Right cardiac atrium (tissue), 5 donors: ENCODE measurements at regions of chr11 and their contacts with region 1.

Region 1: DNA sequence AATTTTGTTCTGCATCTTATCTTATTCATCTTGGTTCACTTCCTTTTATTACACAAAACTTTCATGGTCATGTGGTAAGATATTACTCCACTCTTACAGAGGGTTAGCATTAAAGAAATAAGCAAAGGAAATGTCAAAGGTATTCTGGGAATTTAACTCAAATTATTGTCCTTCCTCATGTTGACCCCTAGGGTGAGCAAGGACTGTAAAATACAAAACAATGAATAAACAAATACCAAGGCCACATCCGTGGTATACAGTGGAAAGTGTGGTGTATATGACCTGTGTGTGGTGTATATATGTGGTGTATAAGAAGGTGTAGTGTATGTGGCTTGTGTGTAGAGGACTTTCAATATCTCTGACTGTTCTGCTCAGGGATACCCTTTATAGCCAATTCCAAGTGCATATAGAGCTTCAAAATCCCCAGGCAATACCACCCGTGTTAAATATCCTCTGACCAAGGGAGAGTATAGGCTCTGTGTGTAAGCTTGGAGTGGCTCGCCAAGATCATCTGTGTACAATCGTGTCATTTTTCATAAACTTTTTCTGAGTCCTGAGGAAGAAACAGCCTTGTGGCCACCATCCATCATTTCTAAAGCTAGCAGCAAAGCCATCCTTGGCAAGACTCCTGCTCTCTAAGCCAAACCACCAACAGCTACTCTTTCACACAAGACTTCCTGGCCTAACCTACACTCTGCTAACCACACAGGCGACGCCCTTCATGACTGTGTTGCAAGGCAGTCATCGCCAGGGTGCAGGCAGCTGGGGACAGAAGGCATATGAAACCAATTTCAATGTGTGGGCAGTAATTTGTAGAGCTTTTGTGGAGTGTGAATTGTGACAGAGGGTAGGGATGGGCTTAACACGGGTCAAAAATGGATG is 548.0 kb downstream of the ETS1 start:
- DNase-seq: peak in 2 of 3 donors; percentile 33 to 74
- ATAC-seq: peak; percentile 62 to 64
- H3K4me3 ChIP-seq: no peak overlapping the region
- H3K27ac ChIP-seq: no peak overlapping the region
- H3K4me1 ChIP-seq: no peaks in the 10 kb centered on the region
- H3K27me3 ChIP-seq: no peaks in the 10 kb centered on the region

Region 2: DNA sequence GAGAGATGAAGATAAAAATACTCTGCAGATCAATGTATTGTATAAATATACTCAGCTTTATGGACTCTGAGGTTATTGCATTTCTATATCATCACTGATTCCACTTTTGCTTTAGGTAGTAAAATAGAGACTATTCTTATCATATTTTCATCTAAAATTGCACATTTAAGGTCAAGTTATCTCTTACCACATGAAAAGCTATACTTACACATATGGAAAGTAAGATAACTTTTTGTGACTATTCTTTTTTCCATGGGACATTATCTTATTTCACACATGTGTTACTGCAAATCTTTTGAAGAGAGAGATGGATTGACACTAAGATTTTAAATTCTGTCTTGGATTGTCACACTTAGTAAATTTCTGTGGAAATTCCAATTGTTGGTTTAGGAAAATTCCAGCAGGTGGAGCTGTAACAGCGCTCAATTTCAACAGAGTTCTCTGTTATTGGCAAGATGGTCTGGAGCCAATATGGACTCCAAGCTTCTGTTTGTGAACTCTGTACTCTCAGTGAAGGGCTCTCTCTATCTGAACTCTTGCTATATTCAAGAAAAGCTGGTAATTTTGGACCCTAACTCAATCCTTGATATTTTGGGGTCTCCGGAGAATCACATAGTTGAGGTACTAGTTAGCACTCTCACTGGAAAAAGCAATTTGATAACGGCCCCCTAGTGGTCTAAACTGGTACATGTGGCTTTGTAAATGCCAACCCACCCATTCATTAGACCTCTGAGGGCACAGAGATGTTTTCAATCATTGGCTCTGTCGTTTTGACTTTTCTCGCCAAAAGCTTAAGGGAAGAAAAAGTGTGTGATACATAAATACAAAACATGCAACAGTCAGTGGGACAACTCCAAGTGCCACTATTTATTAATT is 118.3 kb after region 1 on chr11:
- intact Hi-C with region 1: loop called (anchors 5 to 10 kb)
- DNase-seq: no peak
- ATAC-seq: peak; percentile 80 to 87
- H3K4me3 ChIP-seq: peak overlapping the region; percentile 25
- H3K27ac ChIP-seq: no peak overlapping the region
- H3K4me1 ChIP-seq: no peaks in the 10 kb centered on the region
- H3K27me3 ChIP-seq: no peaks in the 10 kb centered on the region

Region 3: DNA sequence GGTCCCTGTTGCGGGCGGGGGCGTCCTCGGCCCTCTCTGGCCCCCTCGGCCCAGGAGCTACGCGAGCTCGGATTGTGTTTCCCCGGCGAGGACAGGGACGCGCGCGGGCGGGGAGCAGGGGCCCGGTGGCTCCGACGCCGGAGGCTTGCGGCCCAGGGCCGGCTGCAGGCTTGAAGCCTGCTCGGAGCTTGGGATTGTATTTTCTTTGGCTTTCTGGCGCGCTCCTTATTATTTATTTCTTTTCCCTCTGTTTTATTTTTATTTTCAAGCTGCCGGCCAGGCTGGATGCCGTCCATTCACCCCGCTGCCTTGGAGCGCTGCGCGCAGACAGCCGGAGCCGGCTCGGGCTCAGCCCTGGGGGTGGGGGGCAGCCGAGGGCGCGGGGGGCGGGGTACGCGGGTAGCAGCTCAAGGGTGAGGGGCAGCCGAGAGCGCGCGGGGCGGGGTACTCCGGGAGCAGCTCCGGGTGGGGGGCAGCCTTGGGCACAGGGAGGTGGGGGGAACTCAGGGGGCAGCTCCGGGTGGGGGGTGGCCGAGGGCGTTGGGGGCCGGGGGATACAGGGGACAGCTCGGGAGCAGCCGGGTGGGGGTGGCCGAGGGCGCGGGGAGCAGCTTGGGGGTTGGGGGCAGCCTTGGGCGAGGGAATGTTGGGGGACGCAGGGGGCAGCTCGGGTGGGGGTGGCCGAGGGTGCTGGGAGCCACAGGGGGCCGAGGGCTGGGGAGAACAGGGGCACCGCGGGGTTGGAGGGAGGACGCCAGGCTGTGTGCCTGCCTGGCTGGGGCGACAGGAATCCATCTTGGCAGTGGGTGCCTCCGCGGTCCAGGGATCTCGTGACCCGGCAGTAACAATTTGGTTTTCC is 785.0 kb after region 1 on chr11:
- intact Hi-C with region 1: loop called in 1 of 4 experiments (anchors 10 kb)
- DNase-seq: peak in 2 of 3 donors; percentile 78
- ATAC-seq: peak; percentile 54 to 76
- H3K4me3 ChIP-seq: peak overlapping the region; percentile 16
- H3K27ac ChIP-seq: peak overlapping the region; percentile 5
- H3K4me1 ChIP-seq: peaks cover 5% of the 10 kb centered on the region
- H3K27me3 ChIP-seq: no peaks in the 10 kb centered on the region

Region 4: GRCh38 chr11:128831174-128832120 is 792.1 kb after region 1 on chr11:
- intact Hi-C with region 1: loop called in 2 of 4 experiments (anchors 5 to 10 kb)
- DNase-seq: peak; percentile 76 to 91 (median 90)
- ATAC-seq: peak; percentile 70 to 77
- H3K4me3 ChIP-seq: no peak overlapping the region
- H3K27ac ChIP-seq: no peak overlapping the region
- H3K4me1 ChIP-seq: peaks cover 7% of the 10 kb centered on the region
- H3K27me3 ChIP-seq: no peaks in the 10 kb centered on the region